Calu3 (cell line): ENCODE measurements at regions of chr17 and their contacts with region 1.

Region 1: DNA sequence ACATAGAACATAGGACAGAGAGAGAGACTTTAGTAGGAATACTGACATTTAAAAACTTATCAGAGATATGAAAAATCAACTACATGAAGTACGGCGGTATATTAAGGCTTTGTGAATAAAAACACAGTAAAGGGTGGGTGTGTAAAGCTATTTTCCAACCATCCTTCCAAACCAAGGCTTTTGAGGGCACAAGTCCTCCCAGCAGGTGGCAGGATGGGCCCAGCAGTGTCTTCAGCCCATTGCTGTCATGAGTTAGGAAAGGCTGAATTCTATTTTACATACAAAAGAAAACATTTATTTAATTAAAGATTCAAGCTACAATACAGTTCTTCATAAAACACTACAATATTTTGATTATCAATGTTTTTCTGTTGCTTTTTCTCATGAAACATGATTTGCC is 841.4 kb downstream of the KCNJ18 start:
- DNase-seq: no peak
- H3K4me3 Mint-ChIP-seq: no peak overlapping the region
- H3K27ac Mint-ChIP-seq: no peak overlapping the region
- H3K4me1 Mint-ChIP-seq: no peaks in the 10 kb centered on the region
- H3K27me3 Mint-ChIP-seq: no peaks in the 10 kb centered on the region
- CTCF ChIP-seq: no peak

Region 2: DNA sequence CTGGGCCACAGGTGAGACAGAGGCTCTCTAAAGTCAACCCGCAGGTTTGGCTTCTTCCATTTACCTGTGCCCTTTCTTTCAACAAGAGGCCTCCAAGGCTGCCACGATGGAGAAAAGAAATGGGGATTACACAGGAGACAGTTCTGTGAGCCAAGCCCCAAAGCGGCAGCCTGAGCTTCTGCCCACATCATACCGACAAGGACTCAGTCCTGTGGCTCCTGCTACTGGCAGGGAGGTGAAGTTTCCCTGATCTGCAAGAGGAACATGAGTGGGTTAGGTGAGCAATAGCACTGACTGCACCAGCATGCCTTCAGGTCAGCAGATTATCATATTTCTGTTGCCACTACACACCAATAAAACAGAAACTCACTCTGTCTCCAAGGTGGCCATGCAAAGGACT is 41.4 kb before region 1 on chr17:
- CTCF ChIA-PET with region 1: no interaction called
- intact Hi-C with region 1: loop called (anchors 5 kb)
- DNase-seq: no peak
- H3K4me3 Mint-ChIP-seq: no peak overlapping the region
- H3K27ac Mint-ChIP-seq: no peak overlapping the region
- H3K4me1 Mint-ChIP-seq: no peaks in the 10 kb centered on the region
- H3K27me3 Mint-ChIP-seq: no peaks in the 10 kb centered on the region
- CTCF ChIP-seq: no peak

Region 3: GRCh38 chr17:22517716-22518115 is 16.0 kb before region 1 on chr17:
- CTCF ChIA-PET with region 1: no interaction called
- intact Hi-C with region 1: no loop called
- DNase-seq: no peak
- H3K4me3 Mint-ChIP-seq: no peak overlapping the region
- H3K27ac Mint-ChIP-seq: no peak overlapping the region
- H3K4me1 Mint-ChIP-seq: no peaks in the 10 kb centered on the region
- H3K27me3 Mint-ChIP-seq: no peaks in the 10 kb centered on the region
- CTCF ChIP-seq: no peak